Ovary (tissue), 10 donors: ENCODE measurements at regions of chr5 and their contacts with region 1.

Region 1: DNA sequence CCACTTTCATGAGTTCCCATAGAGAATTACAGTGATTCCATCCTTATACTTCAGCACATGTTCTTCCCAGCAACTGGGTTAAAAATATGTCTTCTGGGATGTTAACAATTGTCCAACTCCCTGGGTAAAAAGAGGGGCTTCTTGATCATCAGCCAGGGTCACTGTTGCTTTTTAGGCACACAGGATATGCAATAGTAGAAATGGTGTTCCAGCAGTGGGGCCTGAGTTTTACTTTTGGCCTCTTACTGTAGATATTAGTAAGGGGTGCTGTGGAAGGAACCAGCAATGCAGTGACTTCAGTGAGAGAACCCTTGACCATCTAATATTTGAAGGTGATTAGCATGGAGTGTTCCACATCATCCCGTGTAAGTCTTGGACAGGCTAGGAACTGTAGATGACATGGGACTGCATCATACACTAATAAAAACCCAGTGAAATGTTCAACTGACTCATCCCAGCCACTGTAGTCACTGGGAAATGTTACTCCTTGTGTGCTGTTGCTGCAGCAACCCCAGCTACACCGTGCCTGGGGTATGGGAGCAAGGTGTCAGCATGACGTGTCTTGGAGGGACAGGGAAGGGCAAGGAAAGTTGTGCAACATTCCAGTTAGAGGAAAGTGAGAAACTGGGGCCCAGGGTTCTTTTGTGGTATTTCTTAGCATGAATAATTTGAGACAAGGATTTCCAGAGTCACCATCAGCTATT is 610.9 kb downstream of the RAB3C start:
- DNase-seq: no peak
- H3K4me3 ChIP-seq: no peak overlapping the region
- H3K27ac ChIP-seq: no peak overlapping the region
- H3K4me1 ChIP-seq: no peaks in the 10 kb centered on the region
- H3K27me3 ChIP-seq: no peaks in the 10 kb centered on the region
- CTCF ChIP-seq: no peak
- EP300 ChIP-seq: no peak
- POLR2A ChIP-seq: no peak

Region 2: DNA sequence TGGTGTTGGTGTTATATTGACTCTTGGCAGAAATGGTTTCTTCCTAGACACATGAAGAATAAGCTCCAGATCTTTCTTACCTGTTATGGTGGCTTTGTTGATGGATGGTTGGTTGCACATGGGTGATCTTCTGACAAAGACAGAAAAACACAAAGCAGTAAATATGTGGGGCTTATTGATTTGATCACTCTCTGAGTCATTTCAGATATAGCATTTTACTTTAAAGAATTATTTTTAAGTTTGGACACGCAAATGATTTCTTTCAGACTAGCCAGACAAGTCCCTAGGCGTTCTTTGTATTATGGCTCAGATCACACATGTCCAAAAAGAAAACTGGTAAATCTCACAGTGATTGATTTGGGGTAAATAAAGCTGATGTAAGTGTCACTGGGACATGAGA is 13.3 kb before region 1 on chr5:
- intact Hi-C with region 1: no loop called
- DNase-seq: no peak
- H3K4me3 ChIP-seq: no peak overlapping the region
- H3K27ac ChIP-seq: no peak overlapping the region
- H3K4me1 ChIP-seq: no peaks in the 10 kb centered on the region
- H3K27me3 ChIP-seq: no peaks in the 10 kb centered on the region
- CTCF ChIP-seq: no peak
- EP300 ChIP-seq: no peak
- POLR2A ChIP-seq: no peak

Region 3: GRCh38 chr5:59799668-59800346 is 606.0 kb after region 1 on chr5:
- intact Hi-C with region 1: loop called in 1 of 4 experiments (anchors 5 kb)
- DNase-seq: no peak
- H3K4me3 ChIP-seq: no peak overlapping the region
- H3K27ac ChIP-seq: no peak overlapping the region
- H3K4me1 ChIP-seq: no peaks in the 10 kb centered on the region
- H3K27me3 ChIP-seq: no peaks in the 10 kb centered on the region
- CTCF ChIP-seq: peak; percentile 39 to 52 (median 39)
- EP300 ChIP-seq: no peak
- POLR2A ChIP-seq: no peak

Region 4: DNA sequence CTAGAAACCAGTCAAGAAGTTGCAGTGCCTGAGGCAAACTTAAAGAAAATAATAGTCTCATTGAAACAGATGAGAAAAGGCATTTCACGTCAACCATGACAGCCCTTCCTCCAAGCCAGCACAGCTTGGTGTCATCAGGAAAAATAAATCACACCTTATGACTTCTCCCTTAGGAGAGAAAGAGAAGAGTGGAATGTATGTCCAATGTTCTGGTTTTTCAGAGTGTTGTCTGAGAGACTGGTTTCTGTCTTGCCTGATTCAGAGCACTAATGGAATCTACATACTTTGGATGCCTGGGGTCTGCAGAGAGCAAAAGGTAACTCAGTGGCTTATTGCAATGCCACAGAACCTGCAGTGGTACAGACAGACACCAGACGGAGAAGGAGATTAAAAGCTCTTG is 805.3 kb after region 1 on chr5:
- intact Hi-C with region 1: no loop called
- DNase-seq: no peak
- H3K4me3 ChIP-seq: no peak overlapping the region
- H3K27ac ChIP-seq: no peak overlapping the region
- H3K4me1 ChIP-seq: no peaks in the 10 kb centered on the region
- H3K27me3 ChIP-seq: no peaks in the 10 kb centered on the region
- CTCF ChIP-seq: no peak
- EP300 ChIP-seq: no peak
- POLR2A ChIP-seq: no peak